Sciatic nerve (tissue), 2 donors: ENCODE measurements at regions of chr13 and their contacts with region 1.

Region 1: GRCh38 chr13:46152627-46153328 is 29.2 kb downstream of the LCP1 start:
- DNase-seq: no peak
- ATAC-seq: no peak

Region 2: DNA sequence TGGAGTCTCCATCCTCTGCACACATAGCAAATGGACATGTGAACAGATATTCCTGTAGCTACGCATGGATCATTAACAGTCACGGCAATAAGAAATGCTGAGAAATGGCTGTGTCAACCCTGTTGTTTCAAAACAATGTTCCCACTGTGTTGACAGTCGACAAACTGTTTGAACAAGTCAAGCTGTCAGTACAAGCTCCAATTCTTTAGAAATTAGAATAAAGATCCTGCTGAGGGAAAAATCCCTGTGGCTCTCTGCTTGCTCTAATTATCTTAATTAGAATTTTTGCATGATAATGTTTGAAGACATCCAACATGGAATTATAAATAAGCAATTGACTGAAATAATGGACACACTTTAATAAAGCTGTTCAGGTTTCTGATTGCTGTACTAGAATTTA is 10.0 kb before region 1 on chr13:
- intact Hi-C with region 1: loop called (anchors 1 kb)
- DNase-seq: no peak
- ATAC-seq: no peak

Region 3: GRCh38 chr13:46341112-46341711 is 188.4 kb after region 1 on chr13:
- intact Hi-C with region 1: no loop called
- DNase-seq: no peak
- ATAC-seq: no peak